ENCODE measurements at regions of chr18 and their contacts with region 1.

Region 1: DNA sequence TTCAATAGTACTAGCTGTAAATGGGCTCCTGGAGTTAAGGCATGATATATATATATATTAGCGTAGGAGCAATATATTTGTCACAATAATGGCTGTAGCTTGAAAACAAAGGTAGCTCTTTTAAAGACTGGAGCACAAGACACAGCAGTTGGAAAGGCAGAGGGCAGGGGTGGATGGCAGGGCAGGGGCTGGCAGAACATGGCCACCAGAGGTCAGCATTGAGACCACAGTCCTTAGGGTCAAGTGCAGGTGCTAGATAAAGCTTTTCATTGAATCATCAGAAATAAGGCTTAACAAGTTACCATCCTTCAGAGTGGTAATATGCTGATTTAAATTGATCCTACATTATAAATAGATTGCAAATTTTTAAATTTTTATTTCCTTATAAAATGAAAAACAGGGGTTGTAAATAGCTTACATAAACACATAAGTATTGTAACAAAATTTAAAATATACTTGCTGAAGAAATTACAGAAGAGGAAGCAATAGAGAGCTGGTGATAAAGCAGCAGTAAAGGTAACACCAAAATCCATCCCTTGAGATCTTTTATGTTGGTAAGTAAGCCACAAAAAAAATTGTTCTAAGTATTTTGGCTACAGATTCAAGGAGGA is 161.2 kb upstream of the PIEZO2 start:
- H3K4me3 ChIP-seq: no peak overlapping the region
- H3K27ac ChIP-seq: no peak overlapping the region
- H3K4me1 ChIP-seq: no peaks in the 10 kb centered on the region
- CTCF ChIP-seq: 0 out of 2 replicates have a peak, but pooled peaks have one; percentile 22

Region 2: DNA sequence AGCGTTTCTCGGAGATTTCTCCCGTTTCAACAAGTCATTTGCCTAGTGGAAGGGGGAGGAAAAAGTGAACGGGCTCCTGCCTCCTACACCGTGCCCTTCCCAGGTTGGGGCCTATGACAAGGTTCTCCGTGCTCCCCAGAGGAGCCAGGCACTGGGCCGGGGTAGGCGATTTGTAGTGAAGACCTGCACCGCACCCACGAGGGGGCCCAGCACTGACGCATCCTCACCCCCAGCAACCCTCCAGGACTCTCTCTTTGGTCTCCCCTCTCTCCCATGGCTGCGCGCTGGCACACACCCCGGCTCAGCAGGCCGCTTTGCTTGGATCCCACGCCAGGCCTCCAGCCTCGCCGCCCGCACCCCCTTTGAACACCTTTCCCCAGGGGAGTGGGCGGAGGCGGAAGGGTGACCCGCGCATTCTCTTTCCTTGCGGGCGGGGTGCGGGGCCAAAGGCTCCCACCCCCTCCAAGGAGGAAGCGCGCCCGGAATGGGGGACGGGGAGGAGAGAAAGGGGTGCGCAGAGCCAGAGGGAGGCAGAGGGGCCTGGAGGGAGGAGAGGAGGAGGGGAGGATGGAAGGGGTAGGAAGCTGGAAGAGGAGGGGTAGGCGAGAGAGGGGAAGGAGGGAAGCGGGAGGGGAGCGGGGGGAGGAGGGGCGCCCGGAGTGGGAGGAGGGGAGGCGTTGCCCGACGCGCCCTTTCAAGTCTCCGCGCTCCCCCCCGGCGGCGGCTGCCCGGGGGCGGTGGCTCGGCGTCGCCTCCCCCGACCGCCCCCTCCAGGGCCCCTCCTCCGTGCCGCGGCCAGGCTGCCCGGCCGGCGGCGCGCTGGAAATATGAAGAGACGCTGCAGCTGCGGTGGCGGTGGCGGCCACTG is 856.5 kb before region 1 on chr18 and contains the start of gene APCDD1:
- CTCF ChIA-PET with region 1: no interaction called
- POLR2A ChIA-PET with region 1: no interaction called
- H3K4me3 ChIP-seq: peak within 1 kb of the TSS; percentile 53
- H3K27ac ChIP-seq: peak within 1 kb of the TSS; percentile 88
- H3K4me1 ChIP-seq: peaks cover 40% of the 10 kb centered on the region
- CTCF ChIP-seq: no peak

Region 3: DNA sequence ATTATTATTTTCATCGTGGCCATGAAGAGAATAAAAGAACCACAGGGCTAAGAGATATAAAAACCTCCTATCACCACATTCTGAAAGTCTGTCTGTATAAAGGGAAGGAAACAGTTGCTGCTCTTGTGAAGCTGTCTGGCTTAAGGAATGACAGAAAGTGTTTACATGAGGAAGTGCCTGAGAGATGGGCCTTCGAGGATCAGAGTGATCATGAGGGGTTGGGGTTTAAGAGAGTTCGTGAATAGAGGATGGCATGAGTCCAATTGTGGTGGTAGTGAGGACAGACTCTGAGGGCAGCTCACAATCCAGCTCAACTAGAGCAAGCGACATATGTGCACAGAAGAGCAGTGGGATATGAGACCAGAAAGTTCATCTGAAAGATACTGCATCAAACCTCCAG is 95.4 kb before region 1 on chr18:
- CTCF ChIA-PET with region 1: no interaction called
- POLR2A ChIA-PET with region 1: no interaction called
- H3K4me3 ChIP-seq: no peak overlapping the region
- H3K27ac ChIP-seq: no peak overlapping the region
- H3K4me1 ChIP-seq: no peaks in the 10 kb centered on the region
- CTCF ChIP-seq: no peak

Region 4: DNA sequence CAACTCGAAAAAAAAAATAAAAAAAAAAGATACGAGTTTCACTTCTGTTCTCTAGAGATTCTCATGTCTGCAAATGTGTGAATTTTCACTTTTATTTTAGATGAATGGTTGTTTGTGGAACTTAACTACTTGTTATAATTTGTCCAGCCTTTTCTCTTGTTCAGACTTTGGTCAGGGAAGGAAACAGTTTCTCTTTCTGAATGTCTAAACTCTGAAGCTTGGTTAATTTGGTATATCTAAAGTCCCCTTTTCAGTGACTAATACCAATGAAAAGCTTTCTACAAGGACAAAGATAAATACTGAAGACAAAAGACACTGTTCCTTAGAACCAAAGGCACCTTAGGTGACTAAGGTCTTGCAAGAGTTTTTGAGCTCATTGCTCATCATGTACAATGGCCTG is 16.8 kb before region 1 on chr18:
- CTCF ChIA-PET with region 1: interaction called, 19 read pairs
- POLR2A ChIA-PET with region 1: no interaction called
- H3K4me3 ChIP-seq: no peak overlapping the region
- H3K27ac ChIP-seq: no peak overlapping the region
- H3K4me1 ChIP-seq: no peaks in the 10 kb centered on the region
- CTCF ChIP-seq: no peak

Region 5: GRCh38 chr18:11324956-11325873 is 14.6 kb after region 1 on chr18:
- CTCF ChIA-PET with region 1: interaction called, 16 read pairs
- POLR2A ChIA-PET with region 1: no interaction called
- H3K4me3 ChIP-seq: no peak overlapping the region
- H3K27ac ChIP-seq: no peak overlapping the region
- H3K4me1 ChIP-seq: peaks cover 13% of the 10 kb centered on the region
- CTCF ChIP-seq: no peak

Region 6: DNA sequence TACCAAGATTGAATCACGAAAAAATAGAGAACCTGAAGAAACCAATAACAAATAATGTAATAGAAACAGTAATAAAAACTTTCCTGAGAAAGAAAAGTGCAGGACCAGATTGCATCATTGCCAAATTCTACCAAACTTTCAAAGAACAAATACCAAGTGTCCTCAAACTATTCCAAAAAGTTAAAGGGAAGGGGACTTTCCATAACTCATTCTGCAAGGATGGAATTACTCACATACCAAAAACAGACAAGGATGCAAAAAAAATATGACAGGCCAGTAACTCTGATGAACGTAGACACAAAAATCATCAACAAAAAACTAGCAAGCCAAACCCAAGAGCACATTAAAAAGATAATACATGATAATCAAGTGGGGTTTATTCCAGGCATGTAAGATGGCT is 126.5 kb after region 1 on chr18:
- CTCF ChIA-PET with region 1: no interaction called
- POLR2A ChIA-PET with region 1: no interaction called
- H3K4me3 ChIP-seq: no peak overlapping the region
- H3K27ac ChIP-seq: no peak overlapping the region
- H3K4me1 ChIP-seq: no peaks in the 10 kb centered on the region
- CTCF ChIP-seq: no peak

Region 7: DNA sequence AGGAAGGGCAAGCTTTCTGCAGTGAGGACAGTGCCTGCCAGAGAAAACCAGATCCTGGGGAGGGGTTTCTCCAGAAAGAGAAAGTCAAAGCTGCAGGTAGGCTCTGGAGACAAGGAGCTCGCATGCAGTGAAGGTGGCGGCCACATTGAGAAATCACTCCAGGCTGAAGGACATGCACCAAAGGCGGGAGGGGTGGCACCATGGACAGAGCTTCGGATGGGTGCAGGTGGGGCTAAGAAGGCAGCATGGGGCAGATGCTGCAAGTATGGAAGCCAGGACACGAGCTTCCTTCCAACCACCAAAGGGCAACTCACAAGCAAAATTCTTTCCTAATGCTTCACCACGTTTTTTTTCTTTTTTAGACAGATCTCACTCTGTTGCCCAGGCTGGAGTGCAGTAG is 194.4 kb after region 1 on chr18:
- CTCF ChIA-PET with region 1: interaction called, 10 read pairs
- POLR2A ChIA-PET with region 1: no interaction called
- H3K4me3 ChIP-seq: no peak overlapping the region
- H3K27ac ChIP-seq: no peak overlapping the region
- H3K4me1 ChIP-seq: no peaks in the 10 kb centered on the region
- CTCF ChIP-seq: no peak

Region 8: GRCh38 chr18:11512096-11513030 is 201.8 kb after region 1 on chr18:
- CTCF ChIA-PET with region 1: interaction called, 53 read pairs
- POLR2A ChIA-PET with region 1: no interaction called
- H3K4me3 ChIP-seq: no peak overlapping the region
- H3K27ac ChIP-seq: no peak overlapping the region
- H3K4me1 ChIP-seq: no peaks in the 10 kb centered on the region
- CTCF ChIP-seq: peak; percentile 55; the same call in 1 of the 2 replicates

Region 9: DNA sequence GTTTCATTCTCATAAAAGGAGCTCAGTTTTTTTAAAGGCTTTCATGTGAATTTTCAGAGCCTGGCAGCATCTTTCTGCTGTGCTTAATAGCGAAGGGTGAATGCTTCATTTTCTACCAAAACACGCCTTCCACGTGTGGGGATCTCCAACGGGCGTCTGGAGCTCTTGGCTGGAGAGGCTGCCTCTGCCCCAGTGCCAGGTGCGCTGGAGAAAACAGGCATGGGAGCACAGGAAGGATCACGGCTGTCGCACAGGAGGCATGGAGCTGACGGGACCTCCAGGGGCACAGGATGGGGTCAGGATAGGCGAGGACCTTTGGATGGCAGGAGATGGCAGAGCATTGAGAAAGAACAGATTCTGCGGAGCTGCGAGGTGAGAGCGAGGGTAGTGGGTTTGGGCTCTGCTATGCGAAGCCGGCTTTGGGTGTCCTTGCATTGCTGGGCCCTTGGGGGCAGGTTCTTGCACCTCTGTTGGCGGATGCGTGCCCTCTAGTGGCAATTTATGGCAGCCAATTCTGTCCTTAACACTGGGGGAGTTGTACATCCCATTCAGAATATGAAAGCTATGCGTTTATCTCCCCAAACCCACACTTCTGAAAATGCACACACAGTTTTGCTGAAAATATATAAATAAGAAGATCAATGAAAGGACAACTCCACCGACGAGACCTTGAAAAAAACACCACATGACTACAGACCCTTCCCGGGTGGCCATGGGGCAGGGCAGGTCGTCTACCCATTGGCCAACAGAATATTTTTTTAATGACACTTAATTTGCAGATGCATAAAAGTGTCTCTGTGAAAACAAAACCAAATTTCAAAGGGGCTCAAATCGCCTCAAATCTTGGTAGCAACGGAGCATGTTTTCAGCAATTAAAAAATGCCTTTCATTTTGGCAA is 208.5 kb after region 1 on chr18:
- CTCF ChIA-PET with region 1: interaction called, 53 read pairs
- POLR2A ChIA-PET with region 1: no interaction called
- H3K4me3 ChIP-seq: no peak overlapping the region
- H3K27ac ChIP-seq: no peak overlapping the region
- H3K4me1 ChIP-seq: no peaks in the 10 kb centered on the region
- CTCF ChIP-seq: peak; percentile 82

Region 10: DNA sequence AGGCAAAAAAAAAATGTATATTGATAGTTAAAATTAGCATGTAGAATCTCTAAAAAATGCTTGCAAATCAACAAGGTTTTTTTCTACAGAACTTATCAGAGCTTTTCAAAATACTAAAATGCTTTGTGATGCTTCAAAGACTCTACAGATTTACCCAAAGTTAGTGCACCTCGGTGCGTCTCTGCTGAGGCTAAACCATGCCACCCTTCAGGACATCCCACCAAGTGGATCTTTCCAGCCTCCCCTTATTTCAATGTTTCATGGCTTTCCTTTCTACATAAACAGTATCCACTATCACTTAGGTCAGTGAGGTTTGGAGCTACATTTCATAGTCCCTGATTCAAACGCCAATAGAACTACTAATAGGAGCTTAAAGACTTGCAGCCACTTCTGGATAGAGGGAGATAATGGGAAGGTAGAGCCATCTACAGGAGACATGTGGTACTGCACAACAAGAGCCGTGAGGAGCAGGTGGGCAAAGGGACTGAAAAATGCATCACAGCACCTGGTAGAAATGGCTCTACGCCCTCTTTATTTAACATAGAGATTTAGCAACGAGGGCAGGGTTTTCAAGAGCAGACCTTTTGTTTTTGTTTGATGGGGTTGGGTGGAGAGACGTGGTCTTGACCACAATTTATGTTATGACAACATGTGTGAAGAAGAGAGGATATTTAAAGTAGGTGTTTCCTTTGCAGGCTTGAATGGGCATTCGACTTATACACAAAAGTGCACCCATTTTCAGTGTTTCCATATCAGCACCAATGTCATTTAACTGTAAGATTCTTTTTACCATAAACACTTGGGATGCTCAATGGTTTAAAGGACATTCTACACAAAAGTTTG is 242.7 kb after region 1 on chr18:
- CTCF ChIA-PET with region 1: interaction called, 43 read pairs
- POLR2A ChIA-PET with region 1: no interaction called
- H3K4me3 ChIP-seq: no peak overlapping the region
- H3K27ac ChIP-seq: no peak overlapping the region
- H3K4me1 ChIP-seq: no peaks in the 10 kb centered on the region
- CTCF ChIP-seq: peak; percentile 73; the same call in 1 of the 2 replicates

Region 11: GRCh38 chr18:11695736-11696135 is 385.2 kb after region 1 on chr18:
- CTCF ChIA-PET with region 1: no interaction called
- POLR2A ChIA-PET with region 1: no interaction called
- H3K4me3 ChIP-seq: no peak overlapping the region
- H3K27ac ChIP-seq: no peak overlapping the region
- H3K4me1 ChIP-seq: peaks cover 7% of the 10 kb centered on the region
- CTCF ChIP-seq: no peak

Measured in HEK293 (cell line).